CD4-positive, alpha-beta memory T cell (primary cell): ENCODE measurements at regions of chr14 and their contacts with region 1.

Region 1: GRCh38 chr14:99436247-99437180 is 44.1 kb downstream of the SETD3 start:
- DNase-seq: peak in 2 of 5 donors; percentile 10 to 16
- H3K4me3 ChIP-seq: no peak overlapping the region
- H3K4me3 Mint-ChIP-seq: peak overlapping the region in 7 of 8 donors; percentile 28 to 72 (median 67)
- H3K27ac ChIP-seq: peak overlapping the region; percentile 18
- H3K27ac Mint-ChIP-seq: peak overlapping the region; percentile 58 to 94 (median 85)
- H3K4me1 ChIP-seq: peaks cover 36% of the 10 kb centered on the region
- H3K4me1 Mint-ChIP-seq: peaks cover 34 to 58% (median 42%) of the 10 kb centered on the region in 4 donors
- H3K27me3 ChIP-seq: no peaks in the 10 kb centered on the region
- H3K27me3 Mint-ChIP-seq: no peaks in the 10 kb centered on the region

Region 2: GRCh38 chr14:99480917-99481744 is 44.6 kb after region 1 on chr14 and contains the start of gene CCNK:
- CTCF ChIA-PET with region 1: interaction called, 3 read pairs
- POLR2A ChIA-PET with region 1: interaction called, 12 read pairs
- intact Hi-C with region 1: no loop called
- DNase-seq: peak; percentile 100
- H3K4me3 ChIP-seq: peak within 1 kb of the TSS; percentile 88 to 97
- H3K4me3 Mint-ChIP-seq: peak within 1 kb of the TSS; percentile 94 to 99 (median 98)
- H3K27ac ChIP-seq: peak within 1 kb of the TSS; percentile 98
- H3K27ac Mint-ChIP-seq: peak within 1 kb of the TSS; percentile 98 to 99 (median 99)
- H3K4me1 ChIP-seq: peaks cover 68% of the 10 kb centered on the region
- H3K4me1 Mint-ChIP-seq: peaks cover 39 to 80% (median 60%) of the 10 kb centered on the region in 4 donors
- H3K27me3 ChIP-seq: no peaks in the 10 kb centered on the region
- H3K27me3 Mint-ChIP-seq: no peaks in the 10 kb centered on the region
- total RNA-seq, gene CCNK: 77.1 to 83.4 TPM

Region 3: GRCh38 chr14:99524804-99525698 is 88.5 kb after region 1 on chr14:
- CTCF ChIA-PET with region 1: no interaction called
- POLR2A ChIA-PET with region 1: no interaction called
- intact Hi-C with region 1: no loop called
- DNase-seq: peak in 4 of 5 donors; percentile 8 to 30 (median 24)
- H3K4me3 ChIP-seq: no peak overlapping the region
- H3K4me3 Mint-ChIP-seq: peak overlapping the region; percentile 51 to 83 (median 70)
- H3K27ac ChIP-seq: no peak overlapping the region
- H3K27ac Mint-ChIP-seq: peak overlapping the region; percentile 15 to 95 (median 93)
- H3K4me1 ChIP-seq: peaks cover 20% of the 10 kb centered on the region
- H3K4me1 Mint-ChIP-seq: peaks cover 5 to 22% (median 12%) of the 10 kb centered on the region in 4 donors
- H3K27me3 ChIP-seq: no peaks in the 10 kb centered on the region
- H3K27me3 Mint-ChIP-seq: no peaks in the 10 kb centered on the region

Region 4: GRCh38 chr14:101250336-101250947 is 1813.9 kb after region 1 on chr14:
- CTCF ChIA-PET with region 1: no interaction called
- POLR2A ChIA-PET with region 1: no interaction called
- intact Hi-C with region 1: no loop called
- DNase-seq: no peak
- H3K4me3 ChIP-seq: no peak overlapping the region
- H3K4me3 Mint-ChIP-seq: no peak overlapping the region
- H3K27ac ChIP-seq: no peak overlapping the region
- H3K27ac Mint-ChIP-seq: no peak overlapping the region
- H3K4me1 ChIP-seq: no peaks in the 10 kb centered on the region
- H3K4me1 Mint-ChIP-seq: peaks cover 0 to 6% (median 5%) of the 10 kb centered on the region in 4 donors
- H3K27me3 ChIP-seq: no peaks in the 10 kb centered on the region
- H3K27me3 Mint-ChIP-seq: peaks cover 9 to 18% of the 10 kb centered on the region in 2 donors